Activated CD4-positive, alpha-beta memory T cell treated with anti-CD3 and anti-CD28 coated beads, Interleukin-2, amount 10 ng/mL, durations not matched to agents 7 days and 5 days (primary cell): ENCODE measurements at regions of chr6 and their contacts with region 1.

Region 1: DNA sequence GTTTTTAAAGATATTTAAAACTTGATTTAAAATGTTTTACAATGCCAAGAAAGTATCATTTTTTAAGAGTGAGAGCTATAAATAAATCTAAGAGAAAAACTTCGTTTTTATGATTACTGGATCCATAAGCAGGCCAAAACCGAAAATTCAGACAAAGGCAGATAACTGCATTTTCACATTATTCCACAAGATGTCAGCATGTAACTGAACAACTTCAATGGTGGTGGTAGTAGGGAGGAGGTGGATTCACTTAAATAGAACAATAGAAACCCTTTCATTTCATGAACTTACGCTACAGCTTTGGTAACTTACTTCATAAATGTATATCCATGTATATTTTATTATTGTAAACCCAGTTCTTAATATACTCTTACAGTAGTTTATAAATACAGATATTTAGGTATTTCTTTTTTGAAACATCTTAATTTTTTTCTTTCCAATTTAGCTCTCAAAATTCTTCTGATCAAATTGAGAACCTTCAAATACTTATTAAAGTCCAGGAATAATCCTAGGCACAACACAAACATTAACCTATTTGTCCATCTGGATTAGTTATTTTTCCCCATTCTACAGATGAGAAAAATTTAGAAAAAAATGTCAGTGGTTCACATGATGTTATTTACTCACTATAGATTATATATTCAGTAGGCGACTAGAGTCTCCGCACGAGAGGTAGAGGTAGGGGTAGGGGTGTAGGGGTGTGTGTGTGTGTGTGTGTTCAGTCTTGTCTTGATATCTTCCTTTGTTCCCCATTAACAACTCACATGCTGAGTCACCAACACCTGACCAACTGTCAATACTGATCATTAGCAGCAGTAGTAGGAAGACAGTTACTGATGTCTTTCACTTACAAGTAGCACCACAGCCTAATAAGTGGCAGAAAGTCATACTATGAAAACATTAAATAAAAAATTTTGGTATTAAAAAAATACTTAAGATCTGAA is 111.5 kb downstream of the ARHGAP18 start:
- DNase-seq: no peak
- H3K4me3 Mint-ChIP-seq: no peak overlapping the region
- H3K27ac Mint-ChIP-seq: no peak overlapping the region
- H3K4me1 Mint-ChIP-seq: peaks cover 4% of the 10 kb centered on the region
- H3K27me3 Mint-ChIP-seq: no peaks in the 10 kb centered on the region

Region 2: GRCh38 chr6:129498950-129499842 is 99.3 kb before region 1 on chr6:
- CTCF ChIA-PET with region 1: interaction called, 25 read pairs
- POLR2A ChIA-PET with region 1: no interaction called
- DNase-seq: no peak
- H3K4me3 Mint-ChIP-seq: peak overlapping the region; percentile 18
- H3K27ac Mint-ChIP-seq: no peak overlapping the region
- H3K4me1 Mint-ChIP-seq: peaks cover 34% of the 10 kb centered on the region
- H3K27me3 Mint-ChIP-seq: no peaks in the 10 kb centered on the region

Region 3: DNA sequence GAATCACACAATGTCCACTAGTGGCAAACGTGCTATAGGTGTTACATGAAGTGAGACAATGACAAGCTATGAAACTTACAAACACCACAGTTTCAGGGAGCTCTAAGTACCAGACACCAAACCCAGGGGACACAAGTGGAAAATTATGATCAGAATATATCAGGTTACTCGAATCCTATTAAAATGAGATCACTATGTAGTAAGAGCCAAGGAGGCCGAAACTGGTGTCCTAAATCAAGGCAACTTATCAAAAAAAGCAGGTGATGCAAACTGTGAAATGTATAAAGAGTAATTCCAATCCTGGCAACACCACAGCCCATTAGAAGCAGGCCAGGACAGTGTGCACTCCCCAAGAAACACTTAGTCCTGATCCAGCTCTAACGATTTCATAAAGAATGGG is 11.1 kb after region 1 on chr6:
- CTCF ChIA-PET with region 1: no interaction called
- POLR2A ChIA-PET with region 1: no interaction called
- DNase-seq: no peak
- H3K4me3 Mint-ChIP-seq: no peak overlapping the region
- H3K27ac Mint-ChIP-seq: no peak overlapping the region
- H3K4me1 Mint-ChIP-seq: peaks cover 10% of the 10 kb centered on the region
- H3K27me3 Mint-ChIP-seq: no peaks in the 10 kb centered on the region

Region 4: GRCh38 chr6:129730477-129731165 is 132.1 kb after region 1 on chr6:
- CTCF ChIA-PET with region 1: interaction called, 161 read pairs
- POLR2A ChIA-PET with region 1: interaction called, 20 read pairs
- DNase-seq: peak; percentile 30
- H3K4me3 Mint-ChIP-seq: no peak overlapping the region
- H3K27ac Mint-ChIP-seq: no peak overlapping the region
- H3K4me1 Mint-ChIP-seq: peaks cover 16% of the 10 kb centered on the region
- H3K27me3 Mint-ChIP-seq: no peaks in the 10 kb centered on the region

Region 5: DNA sequence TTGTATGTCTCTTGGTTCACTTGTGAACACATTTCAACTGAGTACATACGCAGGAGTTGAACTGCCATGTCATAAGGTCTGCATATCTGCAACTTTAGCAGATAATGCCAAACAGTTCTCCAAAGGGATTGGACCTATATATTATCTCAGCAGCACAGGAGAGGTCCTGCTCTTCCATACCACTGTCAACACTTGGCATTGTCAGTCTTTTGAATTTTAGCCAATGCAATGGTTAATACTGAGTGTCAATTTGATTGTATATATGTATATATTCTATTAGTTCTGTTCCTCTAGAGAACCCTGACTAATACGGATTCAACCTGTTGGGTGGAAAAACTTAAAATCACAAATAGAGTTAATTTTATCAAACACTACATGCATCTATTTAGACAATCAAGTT is 137.6 kb after region 1 on chr6:
- CTCF ChIA-PET with region 1: interaction called, 161 read pairs
- POLR2A ChIA-PET with region 1: interaction called, 20 read pairs
- DNase-seq: no peak
- H3K4me3 Mint-ChIP-seq: no peak overlapping the region
- H3K27ac Mint-ChIP-seq: no peak overlapping the region
- H3K4me1 Mint-ChIP-seq: peaks cover 6% of the 10 kb centered on the region
- H3K27me3 Mint-ChIP-seq: no peaks in the 10 kb centered on the region

Region 6: DNA sequence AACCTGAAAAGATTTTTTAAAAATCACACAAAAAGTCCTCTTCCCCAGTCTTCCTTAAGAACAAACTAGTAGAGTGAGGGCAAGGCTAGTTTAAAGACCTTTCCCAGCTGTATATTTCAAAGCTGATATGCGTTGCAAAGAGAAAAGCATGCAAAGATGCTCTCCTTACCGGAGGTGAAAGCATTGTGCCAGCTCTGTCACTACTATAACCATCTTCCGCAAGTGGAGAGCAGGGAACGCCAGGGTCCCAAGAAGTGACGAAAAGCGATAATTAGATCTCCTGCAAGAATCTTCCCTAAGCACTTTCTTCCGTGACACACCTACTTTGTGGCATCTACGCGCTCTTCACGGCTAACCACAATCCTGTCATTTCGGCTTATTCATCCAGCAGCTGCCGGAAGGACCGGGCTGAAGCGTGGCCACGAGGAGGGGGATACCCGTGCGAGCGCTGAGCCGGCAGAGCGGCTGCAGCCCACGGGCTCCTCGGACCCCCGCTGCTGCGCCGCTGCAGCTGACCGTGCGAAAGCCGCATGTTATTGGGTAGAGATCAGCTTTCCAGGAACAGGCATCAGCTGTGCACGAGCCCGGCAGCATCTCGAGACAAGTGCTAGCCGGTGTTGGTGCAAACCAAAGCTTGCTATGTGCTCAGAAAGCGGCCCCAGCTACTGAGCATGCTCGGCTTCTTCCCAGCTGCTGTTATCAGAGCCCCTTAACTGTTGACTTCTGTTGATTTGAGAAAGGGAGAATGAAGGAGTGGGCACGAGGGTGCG is 168.6 kb after region 1 on chr6:
- CTCF ChIA-PET with region 1: interaction called, 27 read pairs
- POLR2A ChIA-PET with region 1: no interaction called
- DNase-seq: peak; percentile 79
- H3K4me3 Mint-ChIP-seq: peak overlapping the region; percentile 70
- H3K27ac Mint-ChIP-seq: peak overlapping the region; percentile 9
- H3K4me1 Mint-ChIP-seq: peaks cover 30% of the 10 kb centered on the region
- H3K27me3 Mint-ChIP-seq: peaks cover 65% of the 10 kb centered on the region

Region 7: DNA sequence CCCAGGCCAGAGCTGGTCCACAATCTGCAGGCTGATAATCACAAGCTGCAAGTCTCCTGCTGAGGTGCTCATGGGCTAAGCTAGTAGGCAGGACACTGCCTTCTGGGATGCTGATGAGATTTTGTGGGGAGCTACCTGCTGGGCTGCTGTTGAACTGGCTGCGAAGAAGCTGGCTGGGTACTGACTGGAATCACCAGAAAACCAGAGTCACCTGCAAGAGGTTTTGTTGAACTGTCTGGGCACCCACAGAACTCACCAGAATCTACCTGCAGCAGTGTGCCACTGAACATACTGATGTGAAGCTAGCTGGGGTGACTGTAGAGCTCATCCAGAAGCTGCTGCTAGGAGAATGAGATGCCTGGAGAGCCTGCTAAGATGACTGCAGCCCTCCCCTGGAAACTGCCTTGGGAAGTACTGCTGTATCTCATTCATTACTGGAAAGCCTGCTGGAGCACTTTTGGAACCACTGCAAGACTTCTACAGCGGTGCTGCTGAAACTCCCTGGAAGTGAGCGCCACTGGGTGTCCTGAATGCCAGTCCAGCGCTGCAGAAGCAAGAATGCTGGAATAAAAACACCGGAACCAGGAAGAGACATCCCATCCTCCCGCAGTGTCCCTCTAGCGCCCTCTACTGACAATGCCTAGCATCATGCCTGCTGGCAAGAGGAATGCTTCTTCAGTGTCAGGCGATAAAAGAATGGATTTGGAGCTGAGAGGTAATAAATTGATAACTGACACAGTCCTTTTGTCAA is 176.4 kb after region 1 on chr6:
- CTCF ChIA-PET with region 1: interaction called, 23 read pairs
- POLR2A ChIA-PET with region 1: no interaction called
- DNase-seq: peak; percentile 50
- H3K4me3 Mint-ChIP-seq: no peak overlapping the region
- H3K27ac Mint-ChIP-seq: no peak overlapping the region
- H3K4me1 Mint-ChIP-seq: peaks cover 1% of the 10 kb centered on the region
- H3K27me3 Mint-ChIP-seq: peaks cover 22% of the 10 kb centered on the region

Region 8: GRCh38 chr6:129801909-129802308 is 203.4 kb after region 1 on chr6:
- CTCF ChIA-PET with region 1: no interaction called
- POLR2A ChIA-PET with region 1: no interaction called
- DNase-seq: no peak
- H3K4me3 Mint-ChIP-seq: no peak overlapping the region
- H3K27ac Mint-ChIP-seq: no peak overlapping the region
- H3K4me1 Mint-ChIP-seq: no peaks in the 10 kb centered on the region
- H3K27me3 Mint-ChIP-seq: peaks cover 13% of the 10 kb centered on the region

Region 9: GRCh38 chr6:130020907-130021629 is 422.6 kb after region 1 on chr6:
- CTCF ChIA-PET with region 1: interaction called, 14 read pairs
- POLR2A ChIA-PET with region 1: no interaction called
- DNase-seq: peak; percentile 85
- H3K4me3 Mint-ChIP-seq: peak overlapping the region; percentile 95
- H3K27ac Mint-ChIP-seq: peak overlapping the region; percentile 97
- H3K4me1 Mint-ChIP-seq: peaks cover 21% of the 10 kb centered on the region
- H3K27me3 Mint-ChIP-seq: peaks cover 2% of the 10 kb centered on the region